AG04450 (cell line): ENCODE measurements at regions of chr6 and their contacts with region 1.

Region 1: DNA sequence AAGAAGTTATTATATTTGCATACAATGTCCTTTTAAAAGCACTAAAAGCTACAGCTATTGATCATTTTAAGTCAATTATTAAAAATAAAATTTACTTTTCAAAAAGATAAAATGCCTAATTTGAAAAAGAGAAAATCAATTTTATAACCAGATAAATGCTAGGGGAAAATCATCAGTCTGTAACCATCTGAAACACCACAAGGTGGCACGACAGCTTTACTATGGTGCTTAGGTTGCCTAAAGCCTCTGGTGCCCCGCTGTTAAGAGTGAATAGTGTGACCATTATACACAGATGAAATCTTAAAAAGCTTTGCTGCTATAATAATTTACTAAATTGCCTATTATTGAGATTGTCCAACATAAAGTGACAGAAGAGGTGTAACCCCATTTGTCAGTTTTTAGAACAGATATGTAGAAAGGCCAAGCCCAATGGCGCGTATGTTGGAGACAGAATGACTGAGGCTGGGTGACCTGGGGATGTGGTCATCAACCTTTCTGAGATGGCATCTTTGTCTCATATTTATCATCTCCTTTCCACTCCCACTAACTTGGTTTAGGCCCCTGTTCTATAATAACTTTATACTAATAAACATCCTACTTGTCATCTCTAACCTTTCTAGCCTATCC is 100.8 kb downstream of the MOXD1 start:
- DNase-seq: peak; percentile 41
- H3K4me3 ChIP-seq: no peak overlapping the region
- H3K27ac ChIP-seq: no peak overlapping the region
- H3K27me3 ChIP-seq: no peaks in the 10 kb centered on the region
- CTCF ChIP-seq: peak; percentile 71

Region 2: GRCh38 chr6:131724114-131724513 is 576.3 kb before region 1 on chr6:
- CTCF ChIA-PET with region 1: no interaction called
- POLR2A ChIA-PET with region 1: no interaction called
- DNase-seq: no peak
- H3K4me3 ChIP-seq: no peak overlapping the region
- H3K27ac ChIP-seq: no peak overlapping the region
- H3K27me3 ChIP-seq: no peaks in the 10 kb centered on the region
- CTCF ChIP-seq: no peak

Region 3: GRCh38 chr6:132131758-132132157 is 168.7 kb before region 1 on chr6:
- CTCF ChIA-PET with region 1: no interaction called
- POLR2A ChIA-PET with region 1: no interaction called
- DNase-seq: peak; percentile 99
- H3K4me3 ChIP-seq: no peak overlapping the region
- H3K27ac ChIP-seq: peak overlapping the region; percentile 99
- H3K27me3 ChIP-seq: no peaks in the 10 kb centered on the region
- CTCF ChIP-seq: no peak

Region 4: GRCh38 chr6:132286026-132287019 is 14.1 kb before region 1 on chr6:
- CTCF ChIA-PET with region 1: interaction called, 24 read pairs
- POLR2A ChIA-PET with region 1: no interaction called
- DNase-seq: no peak
- H3K4me3 ChIP-seq: no peak overlapping the region
- H3K27ac ChIP-seq: no peak overlapping the region
- H3K27me3 ChIP-seq: no peaks in the 10 kb centered on the region
- CTCF ChIP-seq: no peak

Region 5: DNA sequence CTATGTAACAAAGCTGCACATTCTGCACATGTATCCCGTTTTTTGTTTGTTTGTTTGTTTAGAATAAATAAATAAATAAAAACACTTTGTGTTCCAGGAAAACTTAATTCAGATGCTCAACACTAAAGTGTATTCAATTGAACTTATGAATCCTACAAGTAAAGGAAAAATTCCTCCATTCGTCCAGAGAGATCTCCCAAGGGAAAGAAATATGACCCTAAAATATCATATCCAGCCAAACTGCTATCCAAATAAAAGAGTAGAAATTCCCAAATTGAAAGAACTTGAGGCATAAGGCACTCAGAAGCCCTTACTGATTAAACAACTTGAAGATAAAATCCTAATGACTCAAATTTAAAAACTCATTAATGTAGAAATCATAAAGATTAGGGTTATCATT is 10.5 kb after region 1 on chr6:
- CTCF ChIA-PET with region 1: no interaction called
- POLR2A ChIA-PET with region 1: no interaction called
- DNase-seq: no peak
- H3K4me3 ChIP-seq: no peak overlapping the region
- H3K27ac ChIP-seq: no peak overlapping the region
- H3K27me3 ChIP-seq: no peaks in the 10 kb centered on the region
- CTCF ChIP-seq: no peak

Region 6: GRCh38 chr6:132445201-132445951 is 144.9 kb after region 1 on chr6:
- CTCF ChIA-PET with region 1: interaction called, 11 read pairs
- POLR2A ChIA-PET with region 1: no interaction called
- DNase-seq: peak; percentile 23
- H3K4me3 ChIP-seq: no peak overlapping the region
- H3K27ac ChIP-seq: no peak overlapping the region
- H3K27me3 ChIP-seq: no peaks in the 10 kb centered on the region
- CTCF ChIP-seq: no peak

Region 7: DNA sequence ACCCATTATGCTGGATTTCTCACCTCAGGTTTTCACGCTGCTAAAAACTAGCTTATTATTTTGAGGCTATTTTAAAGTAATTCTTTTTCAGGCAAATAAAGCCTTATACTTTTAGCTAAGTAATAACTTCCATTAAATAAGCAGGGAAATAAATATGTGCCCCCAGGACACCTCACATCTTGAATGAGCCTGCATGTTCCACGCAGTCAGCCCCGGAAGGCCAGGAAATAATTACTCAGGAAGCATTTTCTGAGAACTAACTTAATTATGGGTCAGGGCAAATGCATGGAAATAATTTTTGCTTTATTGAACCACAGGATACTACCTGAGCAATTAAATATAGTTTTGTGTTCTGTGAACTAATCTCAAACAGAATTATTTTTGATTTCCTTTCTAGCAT is 171.4 kb after region 1 on chr6:
- CTCF ChIA-PET with region 1: interaction called, 61 read pairs
- POLR2A ChIA-PET with region 1: no interaction called
- DNase-seq: no peak
- H3K4me3 ChIP-seq: no peak overlapping the region
- H3K27ac ChIP-seq: no peak overlapping the region
- H3K27me3 ChIP-seq: no peaks in the 10 kb centered on the region
- CTCF ChIP-seq: no peak

Region 8: DNA sequence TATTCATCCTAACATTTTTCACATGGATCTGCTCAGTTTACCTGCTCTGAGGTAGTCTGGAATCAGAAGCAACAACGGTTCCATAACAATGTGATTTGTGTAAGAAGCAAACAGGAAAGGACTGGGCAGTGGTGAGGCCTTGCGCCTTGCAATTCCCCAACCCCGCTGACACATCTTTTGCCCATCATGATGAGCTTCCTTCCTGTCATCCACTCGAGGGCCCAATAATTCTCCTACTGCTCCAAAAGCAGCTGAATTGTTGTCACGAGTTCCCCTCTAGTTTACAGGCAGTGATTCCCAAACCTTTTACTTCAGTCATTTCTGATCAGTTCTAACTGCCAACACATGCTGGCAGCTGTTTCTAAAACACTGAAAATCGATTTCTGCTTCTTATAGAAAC is 189.6 kb after region 1 on chr6:
- CTCF ChIA-PET with region 1: interaction called, 281 read pairs
- POLR2A ChIA-PET with region 1: no interaction called
- DNase-seq: no peak
- H3K4me3 ChIP-seq: no peak overlapping the region
- H3K27ac ChIP-seq: no peak overlapping the region
- H3K27me3 ChIP-seq: no peaks in the 10 kb centered on the region
- CTCF ChIP-seq: no peak

Region 9: GRCh38 chr6:132708776-132709175 is 408.3 kb after region 1 on chr6:
- CTCF ChIA-PET with region 1: no interaction called
- POLR2A ChIA-PET with region 1: no interaction called
- DNase-seq: no peak
- H3K4me3 ChIP-seq: no peak overlapping the region
- H3K27ac ChIP-seq: no peak overlapping the region
- H3K27me3 ChIP-seq: no peaks in the 10 kb centered on the region
- CTCF ChIP-seq: no peak